ENCODE measurements at regions of chr18 and their contacts with region 1.

Region 1: GRCh38 chr18:7946734-7947377 is 379.7 kb downstream of the PTPRM start:
- DNase-seq: peak; percentile 89
- ATAC-seq: peak; percentile 79
- H3K4me3 ChIP-seq: peak overlapping the region; percentile 45
- H3K27ac ChIP-seq: peak overlapping the region; percentile 80
- H3K4me1 ChIP-seq: peaks cover 10% of the 10 kb centered on the region
- H3K27me3 ChIP-seq: no peaks in the 10 kb centered on the region
- CTCF ChIP-seq: no peak
- POLR2A ChIP-seq: no peak
- RAD21 ChIP-seq: no peak

Region 2: DNA sequence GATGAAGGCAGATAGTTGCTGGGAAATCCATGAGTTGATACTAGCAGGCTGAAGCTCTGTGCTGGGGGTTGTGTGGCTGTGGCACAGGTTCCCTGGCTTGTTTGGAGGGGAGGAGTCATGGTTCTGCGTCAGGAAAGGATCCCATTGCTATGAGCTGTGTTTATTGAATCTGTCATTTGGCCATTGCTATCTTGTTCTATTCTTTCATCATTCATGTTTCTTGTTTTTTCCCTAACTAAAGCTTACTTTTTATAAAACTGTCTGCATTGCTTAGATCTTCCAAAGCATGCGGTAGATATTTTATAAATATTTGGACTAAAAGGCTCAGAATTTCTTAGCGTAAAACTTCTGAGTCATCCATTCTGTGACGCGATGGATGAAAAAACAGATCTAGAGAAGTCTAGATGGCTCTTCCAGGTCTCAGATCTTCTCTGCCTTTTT is 44.4 kb before region 1 on chr18:
- CTCF ChIA-PET with region 1: no interaction called
- POLR2A ChIA-PET with region 1: no interaction called
- dilution Hi-C with region 1: no loop called
- in situ Hi-C with region 1: no loop called
- intact Hi-C with region 1: loop called (anchors 2 kb)
- DNase-seq: peak; percentile 99
- ATAC-seq: peak; percentile 92
- H3K4me3 ChIP-seq: no peak overlapping the region
- H3K27ac ChIP-seq: peak overlapping the region; percentile 35; the same call in 1 of the 2 replicates
- H3K4me1 ChIP-seq: peaks cover 20% of the 10 kb centered on the region
- H3K27me3 ChIP-seq: no peaks in the 10 kb centered on the region
- CTCF ChIP-seq: no peak
- POLR2A ChIP-seq: peak; percentile 49; the same call in 1 of the 2 replicates
- RAD21 ChIP-seq: peak; percentile 29; the same call in 1 of the 2 replicates

Region 3: GRCh38 chr18:7957297-7957696 is 10.4 kb after region 1 on chr18:
- CTCF ChIA-PET with region 1: no interaction called
- POLR2A ChIA-PET with region 1: no interaction called
- dilution Hi-C with region 1: no loop called
- in situ Hi-C with region 1: no loop called
- intact Hi-C with region 1: loop called (anchors 1 kb)
- DNase-seq: no peak
- ATAC-seq: no peak
- H3K4me3 ChIP-seq: no peak overlapping the region
- H3K27ac ChIP-seq: no peak overlapping the region
- H3K4me1 ChIP-seq: peaks cover 7% of the 10 kb centered on the region
- H3K27me3 ChIP-seq: no peaks in the 10 kb centered on the region
- CTCF ChIP-seq: no peak
- POLR2A ChIP-seq: no peak
- RAD21 ChIP-seq: no peak

Measured in IMR-90 (cell line).